Psoas muscle (tissue), 8 donors: ENCODE measurements at regions of chr11 and their contacts with region 1.

Region 1: GRCh38 chr11:69101115-69101791 is 52.5 kb downstream of the TPCN2 start:
- DNase-seq: peak; percentile 59 to 79
- ATAC-seq: peak; percentile 79 to 89 (median 87)
- H3K4me3 ChIP-seq: no peak overlapping the region
- H3K27ac ChIP-seq: no peak overlapping the region
- H3K4me1 ChIP-seq: no peaks in the 10 kb centered on the region
- H3K27me3 ChIP-seq: peaks cover 0 to 34% (median 2%) of the 10 kb centered on the region in 3 donors
- CTCF ChIP-seq: peak; percentile 98

Region 2: GRCh38 chr11:69280994-69281393 is 179.7 kb after region 1 on chr11:
- intact Hi-C with region 1: no loop called
- DNase-seq: no peak
- ATAC-seq: peak in 2 of 4 donors; percentile 43 to 68
- H3K4me3 ChIP-seq: no peak overlapping the region
- H3K27ac ChIP-seq: no peak overlapping the region
- H3K4me1 ChIP-seq: no peaks in the 10 kb centered on the region
- H3K27me3 ChIP-seq: peaks cover 0 to 9% (median 4%) of the 10 kb centered on the region in 3 donors
- CTCF ChIP-seq: no peak

Region 3: GRCh38 chr11:69667619-69668604 is 566.7 kb after region 1 on chr11:
- intact Hi-C with region 1: loop called in 1 of 2 experiments (anchors 5 kb)
- DNase-seq: peak in 1 of 2 donors; percentile 29
- ATAC-seq: no peak
- H3K4me3 ChIP-seq: no peak overlapping the region
- H3K27ac ChIP-seq: no peak overlapping the region
- H3K4me1 ChIP-seq: peaks cover 13% of the 10 kb centered on the region
- H3K27me3 ChIP-seq: no peaks in the 10 kb centered on the region
- CTCF ChIP-seq: no peak